Activated CD8-positive, alpha-beta T cell treated with anti-CD3 and anti-CD28 coated beads for 36 hours (primary cell): ENCODE measurements at regions of chr14 and their contacts with region 1.

Region 1: DNA sequence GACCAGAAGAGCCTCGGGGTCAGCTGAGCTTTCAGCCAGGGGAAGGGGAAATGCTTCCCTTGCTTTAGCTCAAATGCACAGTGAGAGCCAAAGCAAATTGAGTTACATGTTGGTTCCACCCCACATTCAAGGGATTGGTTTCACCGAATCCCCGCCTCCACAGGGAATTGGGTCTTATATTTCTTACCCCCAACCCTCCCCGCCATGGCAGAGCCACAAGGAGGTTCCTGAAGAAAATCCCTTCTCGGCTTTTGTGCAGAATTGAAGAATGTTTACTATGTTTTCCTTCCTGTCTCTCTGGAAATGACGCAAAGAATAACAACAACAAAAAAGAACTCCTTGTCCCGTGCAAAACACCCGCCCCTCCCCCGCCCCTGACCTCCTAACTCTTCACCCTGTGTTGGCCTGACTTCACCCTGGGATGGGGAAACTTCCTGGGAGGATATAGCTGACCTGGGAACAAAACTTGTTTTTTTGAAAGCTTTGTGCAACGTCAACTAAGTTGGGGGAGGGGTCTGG is 21.9 kb upstream of the CIPC start:
- DNase-seq: no peak
- ATAC-seq: no peak
- H3K4me3 Mint-ChIP-seq: no peak overlapping the region
- H3K27ac Mint-ChIP-seq: no peak overlapping the region
- H3K4me1 Mint-ChIP-seq: no peaks in the 10 kb centered on the region
- H3K27me3 Mint-ChIP-seq: no peaks in the 10 kb centered on the region
- CTCF ChIP-seq: no peak

Region 2: GRCh38 chr14:76904740-76905438 is 171.3 kb before region 1 on chr14:
- CTCF ChIA-PET with region 1: interaction called, 82 read pairs
- POLR2A ChIA-PET with region 1: no interaction called
- intact Hi-C with region 1: no loop called
- DNase-seq: peak; percentile 95
- ATAC-seq: peak; percentile 93
- H3K4me3 Mint-ChIP-seq: no peak overlapping the region
- H3K27ac Mint-ChIP-seq: peak overlapping the region; percentile 76
- H3K4me1 Mint-ChIP-seq: peaks cover 18% of the 10 kb centered on the region
- H3K27me3 Mint-ChIP-seq: no peaks in the 10 kb centered on the region
- CTCF ChIP-seq: no peak

Region 3: DNA sequence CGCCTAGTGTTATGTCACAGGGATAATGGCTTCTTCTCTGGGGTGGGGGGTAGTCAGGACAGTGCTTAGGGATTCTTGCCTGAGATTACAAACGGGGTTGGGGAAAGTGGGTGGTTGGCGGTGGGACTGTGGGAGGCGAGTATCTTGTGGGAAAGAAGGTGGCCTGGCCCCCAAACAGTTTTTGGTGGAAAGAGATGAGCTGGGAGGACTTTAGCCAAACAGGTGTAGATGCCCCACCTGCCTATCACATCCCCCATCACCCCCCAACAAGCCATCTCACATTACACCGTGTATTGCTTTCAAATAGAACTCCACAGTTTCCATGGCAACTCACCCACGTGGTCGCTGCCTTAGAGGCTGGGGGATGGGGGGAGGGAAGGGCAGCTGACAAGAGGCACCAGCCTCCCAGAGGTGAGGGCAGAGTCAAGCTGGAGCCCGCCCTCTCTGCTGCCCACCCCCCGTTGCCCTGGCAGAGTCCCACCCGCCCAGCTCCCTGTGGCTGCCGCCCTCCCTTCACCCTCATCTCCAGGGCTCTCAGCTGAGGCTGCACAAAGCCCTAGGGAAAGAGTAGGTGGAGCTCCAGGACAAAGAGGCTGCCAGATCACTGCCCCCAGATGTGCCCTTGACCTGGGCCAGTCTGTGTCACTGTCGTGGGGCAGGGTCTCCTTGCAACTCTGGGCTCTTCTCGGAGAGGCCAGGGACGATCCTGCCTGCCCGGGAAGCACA is 151.6 kb before region 1 on chr14:
- CTCF ChIA-PET with region 1: interaction called, 15 read pairs
- POLR2A ChIA-PET with region 1: no interaction called
- intact Hi-C with region 1: no loop called
- DNase-seq: peak; percentile 71
- ATAC-seq: peak; percentile 23
- H3K4me3 Mint-ChIP-seq: no peak overlapping the region
- H3K27ac Mint-ChIP-seq: no peak overlapping the region
- H3K4me1 Mint-ChIP-seq: peaks cover 75% of the 10 kb centered on the region
- H3K27me3 Mint-ChIP-seq: no peaks in the 10 kb centered on the region
- CTCF ChIP-seq: no peak

Region 4: DNA sequence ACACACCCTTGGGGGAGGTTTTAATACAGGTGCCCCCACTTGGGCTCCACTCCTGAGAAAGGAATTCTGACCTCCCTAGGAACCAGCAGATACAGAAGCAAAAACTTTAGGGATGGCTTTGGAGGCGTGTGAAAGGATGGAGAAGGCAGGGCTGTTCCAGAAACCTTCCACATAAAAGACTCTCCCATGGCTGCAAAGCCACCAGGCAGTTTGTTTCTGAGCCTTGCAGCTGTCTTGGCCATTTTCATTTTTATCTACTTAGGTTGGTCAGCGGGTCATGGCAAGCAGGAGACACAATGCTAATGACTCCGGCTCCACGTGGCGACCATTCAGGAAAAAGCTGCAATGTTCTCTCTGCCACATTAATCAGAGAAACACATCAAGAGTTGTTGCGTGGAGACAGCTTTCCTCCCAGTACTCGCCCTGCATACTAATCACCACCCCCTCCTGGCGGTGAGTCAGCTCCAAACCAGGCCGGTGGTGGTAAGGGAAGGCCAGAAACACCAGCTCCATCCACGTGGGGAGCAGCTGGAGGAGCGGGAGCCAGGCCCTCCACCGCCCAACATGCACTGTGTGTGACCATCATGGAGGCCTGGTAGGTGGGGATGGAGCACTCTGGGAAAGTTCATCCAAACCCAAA is 16.8 kb before region 1 on chr14:
- CTCF ChIA-PET with region 1: interaction called, 62 read pairs
- POLR2A ChIA-PET with region 1: no interaction called
- intact Hi-C with region 1: no loop called
- DNase-seq: no peak
- ATAC-seq: no peak
- H3K4me3 Mint-ChIP-seq: no peak overlapping the region
- H3K27ac Mint-ChIP-seq: no peak overlapping the region
- H3K4me1 Mint-ChIP-seq: no peaks in the 10 kb centered on the region
- H3K27me3 Mint-ChIP-seq: no peaks in the 10 kb centered on the region
- CTCF ChIP-seq: no peak

Region 5: GRCh38 chr14:77097700-77098528 is 21.7 kb after region 1 on chr14 and contains the start of gene CIPC:
- CTCF ChIA-PET with region 1: interaction called, 67 read pairs
- POLR2A ChIA-PET with region 1: interaction called, 4 read pairs
- intact Hi-C with region 1: no loop called
- DNase-seq: peak; percentile 99
- ATAC-seq: peak; percentile 94
- H3K4me3 Mint-ChIP-seq: peak within 1 kb of the TSS; percentile 93
- H3K27ac Mint-ChIP-seq: peak within 1 kb of the TSS; percentile 99
- H3K4me1 Mint-ChIP-seq: peaks cover 35% of the 10 kb centered on the region
- H3K27me3 Mint-ChIP-seq: no peaks in the 10 kb centered on the region
- CTCF ChIP-seq: no peak
- total RNA-seq, gene CIPC: 8.8 to 9.6 TPM

Region 6: DNA sequence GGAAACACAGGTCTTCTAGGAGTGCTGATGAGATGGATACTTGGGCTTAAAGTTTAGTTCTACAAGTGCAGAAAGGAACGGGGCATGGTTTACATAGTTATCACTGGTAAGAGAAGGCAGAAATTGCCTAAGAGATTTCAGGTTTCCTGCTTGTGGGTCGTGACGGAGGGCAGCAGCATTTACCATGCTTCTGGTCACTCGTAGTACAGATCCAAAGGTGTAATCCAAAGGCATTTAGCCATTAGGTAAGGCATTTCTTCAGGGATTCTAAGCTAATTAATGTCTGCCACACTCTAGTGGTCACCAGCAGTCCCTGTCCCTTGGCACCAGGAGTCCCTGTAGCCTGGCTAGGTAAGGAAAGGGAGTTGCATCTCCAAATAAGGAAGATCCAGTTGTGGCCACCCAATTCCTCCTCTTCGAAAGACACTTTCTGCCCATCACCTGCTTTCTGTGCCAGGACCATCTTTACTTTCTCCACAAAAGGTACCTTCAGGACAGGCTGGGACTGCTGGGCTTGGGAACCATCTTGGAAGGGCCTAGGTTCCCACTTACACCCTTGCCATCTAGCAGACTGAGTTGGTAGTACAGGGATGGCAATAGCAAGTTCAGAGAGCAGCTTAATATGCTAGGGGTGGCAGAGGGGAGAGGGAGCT is 246.2 kb after region 1 on chr14:
- CTCF ChIA-PET with region 1: no interaction called
- POLR2A ChIA-PET with region 1: no interaction called
- intact Hi-C with region 1: no loop called
- DNase-seq: no peak
- ATAC-seq: no peak
- H3K4me3 Mint-ChIP-seq: peak overlapping the region; percentile 92
- H3K27ac Mint-ChIP-seq: peak overlapping the region; percentile 100
- H3K4me1 Mint-ChIP-seq: peaks cover 18% of the 10 kb centered on the region
- H3K27me3 Mint-ChIP-seq: no peaks in the 10 kb centered on the region
- CTCF ChIP-seq: no peak